Activated B cell treated with CpG ODN at 0.5 μM for 24 hours (primary cell): ENCODE measurements at regions of chr10 and their contacts with region 1.

Region 1: GRCh38 chr10:22704471-22704911 is 9.9 kb downstream of the PIP4K2A start:
- DNase-seq: no peak
- ATAC-seq: peak; percentile 74
- H3K4me3 Mint-ChIP-seq: peak overlapping the region; percentile 49
- H3K27ac Mint-ChIP-seq: peak overlapping the region; percentile 79
- H3K4me1 Mint-ChIP-seq: peaks cover 92% of the 10 kb centered on the region
- H3K27me3 Mint-ChIP-seq: no peaks in the 10 kb centered on the region
- CTCF ChIP-seq: no peak

Region 2: DNA sequence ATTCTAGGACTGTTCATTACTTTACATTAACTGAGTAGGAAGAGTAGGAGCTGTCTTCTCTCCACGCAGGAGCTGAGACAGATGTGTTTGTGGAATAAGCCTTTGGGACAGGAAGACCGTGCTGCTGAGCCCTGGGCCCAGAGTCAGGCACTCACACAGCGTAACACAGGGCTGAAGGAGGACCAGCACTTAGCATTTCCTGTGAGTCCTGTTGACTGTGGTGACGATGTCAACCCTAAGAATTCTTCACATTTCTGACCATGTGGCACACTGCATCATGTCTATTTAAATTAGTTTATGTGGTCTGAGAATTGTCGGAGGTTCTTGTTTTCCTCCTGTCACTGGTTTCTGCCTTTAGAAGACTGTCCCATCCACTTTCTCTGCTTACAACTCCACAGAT is 107.4 kb before region 1 on chr10:
- CTCF ChIA-PET with region 1: no interaction called
- POLR2A ChIA-PET with region 1: interaction called, 11 read pairs
- intact Hi-C with region 1: no loop called
- DNase-seq: no peak
- ATAC-seq: peak; percentile 43
- H3K4me3 Mint-ChIP-seq: peak overlapping the region; percentile 48
- H3K27ac Mint-ChIP-seq: peak overlapping the region; percentile 83
- H3K4me1 Mint-ChIP-seq: peaks cover 96% of the 10 kb centered on the region
- H3K27me3 Mint-ChIP-seq: no peaks in the 10 kb centered on the region
- CTCF ChIP-seq: no peak

Region 3: GRCh38 chr10:22630234-22631174 is 74.0 kb before region 1 on chr10:
- CTCF ChIA-PET with region 1: no interaction called
- POLR2A ChIA-PET with region 1: interaction called, 7 read pairs
- intact Hi-C with region 1: loop called (anchors 2 kb)
- DNase-seq: no peak
- ATAC-seq: peak; percentile 85
- H3K4me3 Mint-ChIP-seq: peak overlapping the region; percentile 75
- H3K27ac Mint-ChIP-seq: peak overlapping the region; percentile 95
- H3K4me1 Mint-ChIP-seq: peaks cover 96% of the 10 kb centered on the region
- H3K27me3 Mint-ChIP-seq: no peaks in the 10 kb centered on the region
- CTCF ChIP-seq: no peak

Region 4: DNA sequence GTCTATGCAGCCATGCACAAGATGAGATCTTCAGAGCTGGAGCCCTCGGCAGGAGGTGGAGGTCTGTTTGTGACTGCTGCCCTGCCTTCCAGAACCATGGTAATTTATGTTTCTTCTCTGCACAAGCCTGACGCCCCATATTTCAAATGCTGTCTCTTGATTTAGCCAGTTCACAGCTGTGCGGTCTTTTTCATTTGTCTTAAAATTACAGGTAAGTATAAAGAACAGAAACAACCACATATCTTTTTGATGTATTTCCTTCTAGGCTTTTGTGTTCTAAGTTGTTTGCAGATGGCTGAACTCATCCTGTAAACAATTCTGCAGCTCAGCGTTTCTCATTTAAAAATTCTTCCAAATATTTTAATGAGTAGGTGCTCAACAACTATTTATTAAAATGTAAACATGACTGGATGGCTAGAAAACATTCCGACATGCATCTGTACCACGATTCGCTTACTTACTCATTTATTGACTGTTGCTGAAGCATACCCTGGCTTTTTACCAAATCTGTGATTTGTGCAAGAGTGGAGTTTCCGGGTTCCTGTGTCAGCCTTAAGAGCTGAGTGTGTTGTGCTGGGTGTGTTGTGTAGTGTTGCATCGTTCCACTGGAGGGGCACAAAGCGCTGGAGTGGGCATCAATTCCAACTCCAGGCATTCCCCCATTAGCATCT is 49.0 kb before region 1 on chr10:
- CTCF ChIA-PET with region 1: no interaction called
- POLR2A ChIA-PET with region 1: interaction called, 3 read pairs
- intact Hi-C with region 1: loop called (anchors 2 kb)
- DNase-seq: no peak
- ATAC-seq: peak; percentile 41
- H3K4me3 Mint-ChIP-seq: peak overlapping the region; percentile 35
- H3K27ac Mint-ChIP-seq: peak overlapping the region; percentile 72
- H3K4me1 Mint-ChIP-seq: peaks cover 98% of the 10 kb centered on the region
- H3K27me3 Mint-ChIP-seq: no peaks in the 10 kb centered on the region
- CTCF ChIP-seq: no peak

Region 5: GRCh38 chr10:22666287-22667092 is 38.0 kb before region 1 on chr10:
- CTCF ChIA-PET with region 1: no interaction called
- POLR2A ChIA-PET with region 1: interaction called, 10 read pairs
- intact Hi-C with region 1: no loop called
- DNase-seq: no peak
- ATAC-seq: peak; percentile 68
- H3K4me3 Mint-ChIP-seq: peak overlapping the region; percentile 59
- H3K27ac Mint-ChIP-seq: peak overlapping the region; percentile 64
- H3K4me1 Mint-ChIP-seq: peaks cover 70% of the 10 kb centered on the region
- H3K27me3 Mint-ChIP-seq: no peaks in the 10 kb centered on the region
- CTCF ChIP-seq: no peak

Region 6: DNA sequence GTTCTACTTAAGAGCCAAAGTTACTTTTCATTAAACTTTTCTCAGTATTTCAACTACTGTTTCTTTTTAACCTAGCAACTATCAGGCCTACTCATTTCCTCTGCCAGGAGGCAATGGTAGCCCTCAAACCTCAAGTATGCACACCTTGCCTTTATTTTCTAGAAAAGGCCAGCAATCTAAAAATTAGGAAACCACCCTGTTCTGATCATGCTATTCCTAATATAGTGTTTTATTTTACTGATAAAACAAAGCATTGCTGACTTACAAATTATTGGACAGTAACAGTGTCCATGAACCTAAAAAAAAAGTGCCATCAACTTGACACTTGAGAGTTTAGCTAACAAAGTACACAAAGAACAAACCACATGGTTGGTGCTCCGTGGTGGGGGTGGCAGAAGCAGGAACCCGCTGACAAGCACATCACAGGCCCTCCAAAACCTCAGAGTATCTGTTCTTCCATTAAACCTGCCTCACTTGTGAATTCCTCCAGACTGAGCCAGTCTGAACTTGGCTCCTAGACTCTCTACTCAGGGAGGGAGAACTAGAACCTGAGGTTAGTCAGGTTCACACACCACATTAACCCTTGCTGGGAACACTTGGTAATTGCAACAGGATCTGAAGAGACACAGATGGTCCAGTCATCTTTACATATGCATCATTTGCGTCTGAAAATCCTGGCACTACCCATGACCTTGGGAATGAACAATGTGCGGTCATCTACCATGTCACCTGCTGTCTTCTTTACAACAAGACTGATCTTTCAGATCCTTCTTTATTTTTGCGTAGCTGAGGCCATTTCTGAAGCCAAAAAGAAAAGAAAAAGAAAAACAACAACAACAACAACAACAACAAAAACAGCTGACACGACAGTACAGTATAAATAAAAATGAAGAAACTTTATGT is 22.0 kb before region 1 on chr10:
- CTCF ChIA-PET with region 1: interaction called, 3 read pairs
- POLR2A ChIA-PET with region 1: interaction called, 7 read pairs
- intact Hi-C with region 1: loop called (anchors 2 kb)
- DNase-seq: no peak
- ATAC-seq: peak; percentile 29
- H3K4me3 Mint-ChIP-seq: peak overlapping the region; percentile 29
- H3K27ac Mint-ChIP-seq: peak overlapping the region; percentile 78
- H3K4me1 Mint-ChIP-seq: peaks cover 70% of the 10 kb centered on the region
- H3K27me3 Mint-ChIP-seq: no peaks in the 10 kb centered on the region
- CTCF ChIP-seq: no peak

Region 7: DNA sequence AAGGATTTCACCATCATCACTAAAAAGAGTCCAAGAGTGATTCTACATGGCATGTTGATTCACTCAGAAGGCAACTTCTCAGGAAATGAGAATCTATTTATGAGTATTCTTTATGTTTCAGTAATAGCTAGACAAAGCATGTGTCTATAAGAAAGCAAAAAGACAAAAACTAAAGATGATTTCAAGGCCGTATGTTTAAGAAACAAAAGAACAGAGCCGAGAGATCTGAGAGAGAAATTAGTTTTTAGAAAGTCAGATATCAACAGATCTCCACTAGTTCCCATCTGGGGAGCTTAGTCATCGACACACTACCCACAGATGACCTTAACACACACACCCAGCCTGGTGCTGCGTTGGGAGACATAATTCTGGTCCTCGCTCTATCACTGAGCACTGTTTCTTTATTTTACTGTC is 11.1 kb before region 1 on chr10:
- CTCF ChIA-PET with region 1: interaction called, 7 read pairs
- POLR2A ChIA-PET with region 1: interaction called, 3 read pairs
- intact Hi-C with region 1: loop called (anchors 1 kb)
- DNase-seq: no peak
- ATAC-seq: peak; percentile 52
- H3K4me3 Mint-ChIP-seq: no peak overlapping the region
- H3K27ac Mint-ChIP-seq: peak overlapping the region; percentile 69
- H3K4me1 Mint-ChIP-seq: peaks cover 79% of the 10 kb centered on the region
- H3K27me3 Mint-ChIP-seq: no peaks in the 10 kb centered on the region
- CTCF ChIP-seq: no peak

Region 8: GRCh38 chr10:24617771-24618391 is 1913.4 kb after region 1 on chr10:
- CTCF ChIA-PET with region 1: no interaction called
- POLR2A ChIA-PET with region 1: no interaction called
- intact Hi-C with region 1: no loop called
- DNase-seq: no peak
- ATAC-seq: no peak
- H3K4me3 Mint-ChIP-seq: no peak overlapping the region
- H3K27ac Mint-ChIP-seq: no peak overlapping the region
- H3K4me1 Mint-ChIP-seq: peaks cover 3% of the 10 kb centered on the region
- H3K27me3 Mint-ChIP-seq: no peaks in the 10 kb centered on the region
- CTCF ChIP-seq: no peak